Aorta (tissue), 5 donors: ENCODE measurements at regions of chr16 and their contacts with region 1.

Region 1: DNA sequence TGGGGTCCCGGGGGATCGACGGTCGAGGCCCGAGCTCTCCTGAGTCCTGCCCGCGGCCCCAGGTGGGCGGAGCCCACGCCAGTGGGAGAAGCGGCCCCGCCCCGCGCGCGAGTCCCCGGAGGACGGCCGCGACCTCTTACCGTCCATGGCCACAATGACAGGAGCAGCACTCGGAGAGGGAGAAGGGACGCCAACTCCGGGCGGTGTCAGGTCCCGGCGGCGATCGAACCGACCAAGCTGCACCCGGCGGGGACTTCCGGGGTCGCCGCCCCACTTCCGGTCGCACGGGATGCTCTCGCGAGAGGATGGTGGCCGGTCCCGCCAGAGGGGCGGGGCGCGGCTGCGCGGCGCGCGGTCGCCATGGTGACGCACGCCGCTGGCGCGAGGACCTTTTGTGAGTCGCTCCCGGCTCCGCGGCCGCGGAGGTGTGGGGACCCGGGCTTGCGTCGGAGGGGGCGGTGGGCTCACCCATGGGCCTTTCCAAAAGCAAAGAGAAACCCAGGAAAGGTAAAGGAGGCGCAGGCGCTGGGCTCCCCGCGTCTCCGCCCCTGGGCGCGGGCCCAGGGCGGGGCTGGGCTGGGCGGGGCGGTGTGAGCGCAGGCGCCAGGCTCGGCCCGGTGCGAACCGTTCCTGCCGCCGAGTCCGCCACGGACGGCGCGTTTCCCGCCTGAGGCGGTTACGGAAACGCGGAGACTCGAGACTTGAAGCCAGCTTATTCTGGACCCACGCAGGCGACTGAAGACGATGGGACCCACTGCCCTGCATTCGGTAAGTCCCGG is at the starts of genes CHMP1A and SPATA33:
- DNase-seq: peak; percentile 93 to 97
- ATAC-seq: peak; percentile 97
- H3K4me3 ChIP-seq: peak within 1 kb of the TSS; percentile 66 to 70
- H3K27ac ChIP-seq: no peak within 1 kb of the TSS
- H3K4me1 ChIP-seq: peaks cover 0 to 3% of the 10 kb centered on the region in 2 donors
- H3K27me3 ChIP-seq: no peaks in the 10 kb centered on the region
- total RNA-seq, gene CHMP1A: 69.0 to 78.8 TPM
- total RNA-seq, gene SPATA33: 6.5 to 8.6 TPM

Region 2: GRCh38 chr16:89686520-89687091 is 29.0 kb after region 1 on chr16 and contains the start of gene CDK10:
- intact Hi-C with region 1: loop called in 1 of 2 experiments (anchors 1 kb)
- DNase-seq: peak; percentile 91 to 96
- ATAC-seq: peak; percentile 96
- H3K4me3 ChIP-seq: peak within 1 kb of the TSS; percentile 86 to 93
- H3K27ac ChIP-seq: peak within 1 kb of the TSS in 1 of 2 donors; percentile 68
- H3K4me1 ChIP-seq: no peaks in the 10 kb centered on the region
- H3K27me3 ChIP-seq: no peaks in the 10 kb centered on the region
- total RNA-seq, gene CDK10: 29.9 to 71.1 TPM